ENCODE measurements at regions of chr5 and their contacts with region 1.

Region 1: DNA sequence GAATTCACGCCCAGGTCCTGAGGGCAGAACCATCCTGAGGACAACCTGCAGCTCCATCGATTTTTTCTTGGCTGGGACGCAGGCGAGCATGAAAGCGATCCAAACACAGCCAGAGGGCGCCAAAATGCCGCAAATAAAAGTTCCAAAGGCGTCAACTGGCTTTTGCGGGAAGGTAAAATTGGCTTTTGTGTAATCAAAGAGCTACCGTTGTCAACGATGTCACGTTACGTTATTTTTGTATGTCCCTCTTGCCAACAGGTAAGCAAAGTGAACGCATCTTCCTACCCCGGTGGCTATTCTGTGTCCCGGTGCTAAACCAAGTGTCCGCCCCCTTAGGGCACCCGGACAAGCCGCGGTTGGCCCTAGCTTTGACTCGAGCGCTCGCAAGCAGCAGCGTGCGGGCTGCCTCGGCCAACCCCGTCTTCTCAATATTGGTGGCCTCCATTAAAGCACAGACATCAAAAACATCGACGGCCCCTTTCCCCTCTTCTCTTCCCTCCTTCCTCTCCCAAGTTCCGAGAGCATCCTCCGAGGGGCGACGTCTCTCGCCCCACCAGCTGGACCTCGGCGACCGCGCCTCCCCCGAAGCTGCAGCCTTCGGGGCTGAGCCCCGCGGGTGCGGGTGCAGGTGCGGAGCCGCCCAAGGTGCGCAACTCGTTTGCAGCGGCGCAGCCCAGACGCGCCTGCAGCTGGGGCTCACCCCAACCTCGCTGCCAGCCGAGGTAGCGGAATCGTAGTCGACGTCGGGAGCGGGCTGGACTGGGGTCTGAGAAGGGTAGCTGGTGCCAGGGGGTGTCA is 1.1 kb upstream of the BASP1 start:
- DNase-seq: peak; percentile 90
- H3K4me3 ChIP-seq: peak overlapping the region; percentile 73
- H3K27ac ChIP-seq: no peak overlapping the region
- H3K4me1 ChIP-seq: peaks cover 23% of the 10 kb centered on the region
- H3K27me3 ChIP-seq: no peaks in the 10 kb centered on the region

Region 2: GRCh38 chr5:16160706-16161105 is 1055.7 kb before region 1 on chr5:
- in situ Hi-C with region 1: loop called (anchors 25 kb)
- DNase-seq: peak; percentile 84
- H3K4me3 ChIP-seq: no peak overlapping the region
- H3K27ac ChIP-seq: no peak overlapping the region
- H3K4me1 ChIP-seq: no peaks in the 10 kb centered on the region
- H3K27me3 ChIP-seq: no peaks in the 10 kb centered on the region

Region 3: GRCh38 chr5:17400724-17401464 is 184.5 kb after region 1 on chr5:
- in situ Hi-C with region 1: no loop called
- DNase-seq: no peak
- H3K4me3 ChIP-seq: no peak overlapping the region
- H3K27ac ChIP-seq: no peak overlapping the region
- H3K4me1 ChIP-seq: peaks cover 14% of the 10 kb centered on the region
- H3K27me3 ChIP-seq: peaks cover 16% of the 10 kb centered on the region; the same call in 1 of the 2 replicates

Region 4: DNA sequence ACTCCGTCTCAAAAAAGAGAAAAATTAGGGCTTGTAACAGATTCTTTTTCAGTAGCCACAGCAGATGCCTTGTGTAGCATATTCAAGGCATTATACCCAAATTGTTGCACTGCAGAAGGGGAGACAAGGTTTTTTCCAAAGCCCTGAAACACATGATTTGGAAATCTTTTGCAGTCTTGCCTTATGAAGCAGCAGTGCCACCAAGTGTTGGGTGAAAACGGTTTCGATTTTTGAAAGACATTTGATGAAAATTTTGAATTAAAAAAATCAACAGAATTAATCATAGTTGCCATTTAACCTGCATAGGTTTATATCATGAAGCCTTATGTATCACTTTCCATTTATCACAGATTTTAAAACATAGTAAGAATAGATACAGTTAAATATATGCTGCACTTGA is 897.3 kb after region 1 on chr5:
- in situ Hi-C with region 1: loop called (anchors 25 kb)
- DNase-seq: peak; percentile 35
- H3K4me3 ChIP-seq: no peak overlapping the region
- H3K27ac ChIP-seq: no peak overlapping the region
- H3K4me1 ChIP-seq: no peaks in the 10 kb centered on the region
- H3K27me3 ChIP-seq: no peaks in the 10 kb centered on the region

Region 5: GRCh38 chr5:18281682-18282557 is 1065.5 kb after region 1 on chr5:
- in situ Hi-C with region 1: loop called (anchors 10 kb)
- DNase-seq: peak; percentile 67
- H3K4me3 ChIP-seq: no peak overlapping the region
- H3K27ac ChIP-seq: no peak overlapping the region
- H3K4me1 ChIP-seq: no peaks in the 10 kb centered on the region
- H3K27me3 ChIP-seq: peaks cover 6% of the 10 kb centered on the region; the same call in 1 of the 2 replicates

Measured in GM23248 (cell line).